Calu3 (cell line): ENCODE measurements at regions of chrX and their contacts with region 1.

Region 1: DNA sequence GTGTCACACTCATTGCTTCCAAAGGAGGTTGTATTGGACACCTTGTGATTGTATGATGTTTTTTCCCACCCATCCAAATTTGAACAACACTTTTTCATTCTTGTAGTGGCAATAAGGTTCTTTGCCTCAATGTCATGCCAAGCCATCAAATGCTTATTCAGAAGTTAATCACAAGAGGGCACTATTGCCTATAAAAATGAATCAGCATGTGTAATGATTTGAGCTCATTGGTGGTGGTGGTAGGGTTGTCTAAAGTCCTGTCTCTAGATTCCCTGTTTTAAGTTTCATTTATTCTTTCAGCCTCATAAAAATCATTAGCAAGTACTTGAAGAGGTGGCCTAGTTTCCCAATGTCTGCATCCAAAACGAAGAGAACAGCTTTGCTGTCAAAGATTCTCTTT is 37.0 kb downstream of the IRS4 start:
- DNase-seq: no peak
- H3K4me3 Mint-ChIP-seq: no peak overlapping the region
- H3K27ac Mint-ChIP-seq: no peak overlapping the region
- H3K4me1 Mint-ChIP-seq: no peaks in the 10 kb centered on the region
- H3K27me3 Mint-ChIP-seq: no peaks in the 10 kb centered on the region
- CTCF ChIP-seq: no peak

Region 2: GRCh38 chrX:108347800-108348199 is 351.6 kb before region 1 on chrX:
- CTCF ChIA-PET with region 1: no interaction called
- intact Hi-C with region 1: no loop called
- DNase-seq: no peak
- H3K4me3 Mint-ChIP-seq: no peak overlapping the region
- H3K27ac Mint-ChIP-seq: no peak overlapping the region
- H3K4me1 Mint-ChIP-seq: no peaks in the 10 kb centered on the region
- H3K27me3 Mint-ChIP-seq: no peaks in the 10 kb centered on the region
- CTCF ChIP-seq: no peak

Region 3: DNA sequence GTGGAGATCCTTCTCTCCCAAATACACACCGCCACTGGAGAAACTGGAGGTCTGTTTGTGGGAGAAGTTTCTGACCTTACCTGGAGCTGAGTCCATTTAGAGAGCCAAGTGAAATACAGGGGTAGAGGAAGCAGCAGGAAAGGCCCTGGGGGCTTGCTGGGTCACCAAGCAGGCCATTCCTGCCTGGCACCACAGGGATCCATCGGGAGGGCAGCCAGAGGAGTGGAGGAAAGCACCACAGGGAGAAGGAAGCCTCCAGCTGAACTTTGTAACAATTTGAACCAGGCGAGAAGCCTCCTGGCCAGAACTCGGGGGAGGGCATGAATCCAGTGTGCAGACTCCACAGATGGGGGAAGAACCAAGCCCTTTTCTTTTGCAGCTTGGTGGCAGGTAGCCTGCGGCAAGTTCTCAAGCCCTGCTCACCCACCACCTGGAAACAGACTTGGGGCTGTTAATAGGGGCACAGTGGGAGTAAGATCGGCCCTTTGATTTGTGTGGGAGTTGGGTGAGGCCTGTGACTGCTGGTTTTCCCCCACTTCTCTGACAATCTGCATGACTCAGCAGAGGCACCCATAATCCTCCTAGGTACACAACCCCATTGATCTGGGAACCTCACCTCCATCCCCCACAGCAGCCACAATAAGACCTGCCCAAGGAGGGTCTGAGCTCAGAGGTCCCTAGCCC is 57.6 kb before region 1 on chrX:
- CTCF ChIA-PET with region 1: no interaction called
- intact Hi-C with region 1: no loop called
- DNase-seq: no peak
- H3K4me3 Mint-ChIP-seq: no peak overlapping the region
- H3K27ac Mint-ChIP-seq: no peak overlapping the region
- H3K4me1 Mint-ChIP-seq: peaks cover 6% of the 10 kb centered on the region
- H3K27me3 Mint-ChIP-seq: no peaks in the 10 kb centered on the region
- CTCF ChIP-seq: no peak

Region 4: DNA sequence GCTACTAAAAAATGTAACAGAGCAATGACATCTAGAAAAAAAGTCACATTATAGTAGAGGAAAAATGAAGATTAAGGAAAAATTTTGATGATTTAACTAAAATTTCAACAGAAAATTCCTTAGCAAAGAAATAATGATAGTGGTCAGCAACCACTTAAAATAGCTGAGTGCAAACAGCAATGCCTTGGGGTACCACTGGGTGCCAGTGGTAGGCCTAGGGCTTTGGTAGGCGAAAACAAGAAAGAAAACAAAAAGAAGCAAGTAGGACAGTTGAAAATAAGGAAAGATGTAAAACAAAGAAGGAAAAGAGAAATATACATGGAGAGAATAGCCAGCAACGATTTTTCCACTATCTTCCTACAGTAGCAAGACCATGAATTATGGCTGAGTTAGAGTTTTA is 350.5 kb after region 1 on chrX:
- CTCF ChIA-PET with region 1: no interaction called
- intact Hi-C with region 1: loop called (anchors 10 kb)
- DNase-seq: peak; percentile 6
- H3K4me3 Mint-ChIP-seq: no peak overlapping the region
- H3K27ac Mint-ChIP-seq: no peak overlapping the region
- H3K4me1 Mint-ChIP-seq: no peaks in the 10 kb centered on the region
- H3K27me3 Mint-ChIP-seq: no peaks in the 10 kb centered on the region
- CTCF ChIP-seq: no peak